ENCODE measurements at regions of chr3 and their contacts with region 1.

Region 1: DNA sequence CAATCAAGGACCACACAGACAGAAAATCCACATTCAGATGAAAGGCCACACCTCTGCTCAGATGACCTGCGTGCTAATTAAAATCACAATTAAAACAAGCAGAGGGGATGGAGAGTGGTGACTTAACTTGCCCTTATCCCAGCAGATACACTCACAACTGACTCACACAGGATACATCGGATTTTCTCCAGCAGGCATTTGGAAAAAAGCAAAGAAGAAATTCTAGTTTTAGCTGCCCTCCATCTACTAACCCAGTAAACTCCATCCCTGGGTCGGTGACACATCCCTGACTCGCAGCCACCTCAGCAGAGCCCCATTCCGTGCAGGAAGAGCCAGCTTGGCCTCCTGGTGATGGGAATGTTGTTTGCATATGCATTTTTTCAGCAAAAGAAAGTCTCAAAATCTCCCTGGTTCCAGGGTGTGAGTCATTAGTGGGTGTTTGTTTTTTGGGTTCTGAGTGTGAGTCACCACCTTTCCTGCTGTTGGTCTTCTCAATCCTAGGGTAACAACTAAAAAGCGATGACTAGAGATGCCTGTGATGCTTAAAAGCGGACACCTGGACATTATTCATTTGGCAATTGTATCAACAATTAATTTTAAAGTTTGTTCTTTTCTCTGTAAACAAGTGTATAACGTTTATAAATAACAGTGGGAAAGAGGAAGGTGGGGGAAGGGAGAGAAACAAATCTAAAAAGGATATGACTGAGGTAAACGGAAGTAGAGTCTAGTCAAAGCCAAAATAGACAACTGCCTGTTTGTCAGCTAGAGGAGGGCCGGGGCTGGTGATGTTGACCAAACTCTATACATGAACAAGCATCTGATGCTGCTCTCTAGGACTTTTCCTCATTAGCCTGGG is 49.8 kb upstream of the SLC4A7 start:
- DNase-seq: peak; percentile 97
- H3K4me3 ChIP-seq: no peak overlapping the region
- H3K27ac ChIP-seq: peak overlapping the region; percentile 86
- H3K4me1 ChIP-seq: peaks cover 34% of the 10 kb centered on the region
- H3K27me3 ChIP-seq: no peaks in the 10 kb centered on the region
- CTCF ChIP-seq: peak; percentile 39 to 45
- POLR2A ChIP-seq: no peak

Region 2: GRCh38 chr3:27467545-27467944 is 66.4 kb before region 1 on chr3:
- CTCF ChIA-PET with region 1: interaction called, 3 read pairs
- POLR2A ChIA-PET with region 1: no interaction called
- dilution Hi-C with region 1: no loop called
- intact Hi-C with region 1: loop called (anchors 1 kb)
- DNase-seq: peak; percentile 70
- H3K4me3 ChIP-seq: no peak overlapping the region
- H3K27ac ChIP-seq: no peak overlapping the region
- H3K4me1 ChIP-seq: peaks cover 8% of the 10 kb centered on the region
- H3K27me3 ChIP-seq: no peaks in the 10 kb centered on the region
- CTCF ChIP-seq: peak; percentile 36 to 40
- POLR2A ChIP-seq: no peak

Region 3: DNA sequence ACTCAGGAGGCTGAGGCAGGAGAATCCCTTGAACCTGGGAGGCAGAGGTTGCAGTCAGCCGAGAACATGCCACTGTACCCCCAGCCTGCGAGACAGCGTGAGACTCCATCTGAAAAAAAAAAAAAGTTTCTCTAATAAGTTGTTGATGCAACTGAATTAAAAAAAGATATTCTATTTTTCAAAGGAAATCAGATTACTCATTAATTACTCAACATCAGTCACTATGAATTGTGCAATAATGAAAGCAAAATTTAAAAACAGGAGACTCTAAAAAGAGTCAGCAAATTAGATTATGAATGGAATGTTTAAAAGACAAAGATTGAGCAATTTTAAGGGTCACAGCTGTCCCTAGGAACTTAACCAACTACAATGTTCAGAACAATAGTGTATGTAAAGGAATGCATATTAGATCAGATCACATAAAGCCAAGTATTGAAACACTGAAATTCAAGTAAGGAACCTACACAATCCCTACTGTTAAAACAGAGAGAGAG is 10.5 kb after region 1 on chr3:
- CTCF ChIA-PET with region 1: interaction called, 3 read pairs
- POLR2A ChIA-PET with region 1: no interaction called
- dilution Hi-C with region 1: no loop called
- intact Hi-C with region 1: loop called (anchors 1 kb)
- DNase-seq: peak; percentile 70
- H3K4me3 ChIP-seq: no peak overlapping the region
- H3K27ac ChIP-seq: peak overlapping the region; percentile 19
- H3K4me1 ChIP-seq: peaks cover 12% of the 10 kb centered on the region
- H3K27me3 ChIP-seq: no peaks in the 10 kb centered on the region
- CTCF ChIP-seq: no peak
- POLR2A ChIP-seq: no peak

Region 4: DNA sequence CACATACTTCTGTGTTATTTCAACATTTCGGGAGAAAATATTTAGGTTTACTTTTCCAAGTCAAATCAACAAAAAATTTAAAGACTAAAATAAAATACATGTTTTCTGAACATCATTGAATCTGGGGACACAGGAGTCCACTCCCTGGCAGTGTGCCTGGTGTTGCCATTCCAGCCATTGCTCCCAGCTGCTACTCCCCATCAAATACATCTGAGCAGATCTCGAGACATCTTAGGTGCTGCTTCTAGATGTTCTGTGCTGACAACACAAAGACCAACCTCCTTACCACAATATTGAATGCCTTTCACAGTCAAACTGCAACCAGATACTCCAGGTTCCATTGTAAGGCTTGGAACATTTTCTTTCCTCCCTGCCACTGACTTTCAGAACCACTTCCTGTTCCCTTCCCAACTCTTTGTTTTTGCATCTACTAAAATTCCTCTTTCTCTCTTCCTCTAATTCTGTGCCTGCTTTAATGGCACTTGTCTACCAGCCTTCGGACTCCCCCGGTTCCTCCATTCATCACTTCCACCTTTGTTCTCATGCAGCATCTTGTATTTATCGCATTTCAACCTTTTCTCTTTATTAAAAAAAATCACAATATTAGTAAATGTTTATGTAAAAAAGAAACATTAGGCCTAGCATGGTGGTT is 31.4 kb after region 1 on chr3:
- CTCF ChIA-PET with region 1: no interaction called
- POLR2A ChIA-PET with region 1: no interaction called
- dilution Hi-C with region 1: no loop called
- intact Hi-C with region 1: no loop called
- DNase-seq: no peak
- H3K4me3 ChIP-seq: no peak overlapping the region
- H3K27ac ChIP-seq: no peak overlapping the region
- H3K4me1 ChIP-seq: peaks cover 6% of the 10 kb centered on the region
- H3K27me3 ChIP-seq: no peaks in the 10 kb centered on the region
- CTCF ChIP-seq: no peak
- POLR2A ChIP-seq: no peak

Region 5: GRCh38 chr3:27607370-27607769 is 73.4 kb after region 1 on chr3:
- CTCF ChIA-PET with region 1: no interaction called
- POLR2A ChIA-PET with region 1: no interaction called
- dilution Hi-C with region 1: no loop called
- intact Hi-C with region 1: loop called (anchors 1 kb)
- DNase-seq: peak; percentile 84
- H3K4me3 ChIP-seq: no peak overlapping the region
- H3K27ac ChIP-seq: peak overlapping the region; percentile 54
- H3K4me1 ChIP-seq: peaks cover 16% of the 10 kb centered on the region
- H3K27me3 ChIP-seq: no peaks in the 10 kb centered on the region
- CTCF ChIP-seq: no peak
- POLR2A ChIP-seq: no peak

Region 6: GRCh38 chr3:27632431-27633223 is 98.7 kb after region 1 on chr3:
- CTCF ChIA-PET with region 1: interaction called, 6 read pairs
- POLR2A ChIA-PET with region 1: no interaction called
- dilution Hi-C with region 1: no loop called
- intact Hi-C with region 1: loop called (anchors 1 kb)
- DNase-seq: peak; percentile 66
- H3K4me3 ChIP-seq: peak overlapping the region; percentile 32 to 59 (median 42)
- H3K27ac ChIP-seq: peak overlapping the region; percentile 80
- H3K4me1 ChIP-seq: peaks cover 34% of the 10 kb centered on the region
- H3K27me3 ChIP-seq: no peaks in the 10 kb centered on the region
- CTCF ChIP-seq: no peak
- POLR2A ChIP-seq: no peak

Region 7: GRCh38 chr3:28018925-28019718 is 485.2 kb after region 1 on chr3:
- CTCF ChIA-PET with region 1: no interaction called
- POLR2A ChIA-PET with region 1: no interaction called
- dilution Hi-C with region 1: no loop called
- intact Hi-C with region 1: no loop called
- DNase-seq: no peak
- H3K4me3 ChIP-seq: no peak overlapping the region
- H3K27ac ChIP-seq: no peak overlapping the region
- H3K4me1 ChIP-seq: no peaks in the 10 kb centered on the region
- H3K27me3 ChIP-seq: no peaks in the 10 kb centered on the region
- CTCF ChIP-seq: no peak
- POLR2A ChIP-seq: no peak

Region 8: GRCh38 chr3:28348629-28349483 is 814.9 kb after region 1 on chr3 and contains the starts of genes AZI2 and ZCWPW2:
- CTCF ChIA-PET with region 1: no interaction called
- POLR2A ChIA-PET with region 1: no interaction called
- dilution Hi-C with region 1: no loop called
- intact Hi-C with region 1: loop called (anchors 2 kb)
- DNase-seq: peak; percentile 95
- H3K4me3 ChIP-seq: peak within 1 kb of the TSS; percentile 59 to 86 (median 69)
- H3K27ac ChIP-seq: peak within 1 kb of the TSS; percentile 98
- H3K4me1 ChIP-seq: peaks cover 16% of the 10 kb centered on the region
- H3K27me3 ChIP-seq: no peaks in the 10 kb centered on the region
- CTCF ChIP-seq: peak in 1 of 2 donors; percentile 21
- POLR2A ChIP-seq: no peak
- total RNA-seq, gene AZI2: 39.5 and 50.0 TPM in 2 replicates
- total RNA-seq, gene ZCWPW2: 0.40 TPM in 1 of 2 replicates, not detected in the other

Measured in endothelial cell of umbilical vein (primary cell).